GM10248 (cell line): ENCODE measurements at regions of chr16 and their contacts with region 1.

Region 1: DNA sequence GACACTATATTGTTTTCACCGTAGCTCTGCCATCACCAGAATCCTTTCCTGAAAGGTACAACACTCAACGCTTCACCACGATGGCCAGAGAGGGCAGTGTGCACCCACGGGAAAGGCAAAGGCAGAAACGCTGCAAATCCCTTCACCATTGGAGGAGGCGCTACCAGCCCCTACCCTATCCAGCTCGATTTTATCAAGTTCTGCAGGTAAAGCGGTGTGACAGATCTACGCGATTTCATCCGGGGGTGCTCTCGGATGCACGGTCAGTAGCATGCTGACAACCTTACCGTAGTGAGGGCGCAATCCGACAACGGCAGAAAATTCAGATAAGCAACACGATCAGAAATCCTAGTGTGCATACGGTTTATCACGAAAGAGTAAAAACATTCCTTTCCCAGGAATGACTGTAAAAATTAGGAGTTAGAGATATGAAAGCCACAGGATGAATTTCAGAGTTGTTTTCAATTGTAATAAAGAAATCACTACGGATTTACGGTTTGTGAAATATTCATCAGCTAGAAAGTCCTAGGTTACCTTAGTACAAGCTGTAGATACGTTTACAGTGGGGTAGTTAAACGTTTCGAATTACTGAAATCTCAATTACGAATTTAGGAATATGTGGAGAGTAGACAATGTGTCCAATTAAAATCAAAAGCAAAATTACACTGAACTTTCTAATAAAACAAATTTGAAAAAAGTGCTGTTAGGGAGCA is 1.8 kb downstream of the NETO2 start:
- DNase-seq: peak; percentile 79
- CTCF ChIP-seq: peak; percentile 97

Region 2: GRCh38 chr16:46973207-46973995 is 168.5 kb before region 1 on chr16 and contains the start of gene DNAJA2:
- CTCF ChIA-PET with region 1: interaction called, 18 read pairs
- POLR2A ChIA-PET with region 1: no interaction called
- DNase-seq: peak; percentile 93
- CTCF ChIP-seq: no peak

Region 3: DNA sequence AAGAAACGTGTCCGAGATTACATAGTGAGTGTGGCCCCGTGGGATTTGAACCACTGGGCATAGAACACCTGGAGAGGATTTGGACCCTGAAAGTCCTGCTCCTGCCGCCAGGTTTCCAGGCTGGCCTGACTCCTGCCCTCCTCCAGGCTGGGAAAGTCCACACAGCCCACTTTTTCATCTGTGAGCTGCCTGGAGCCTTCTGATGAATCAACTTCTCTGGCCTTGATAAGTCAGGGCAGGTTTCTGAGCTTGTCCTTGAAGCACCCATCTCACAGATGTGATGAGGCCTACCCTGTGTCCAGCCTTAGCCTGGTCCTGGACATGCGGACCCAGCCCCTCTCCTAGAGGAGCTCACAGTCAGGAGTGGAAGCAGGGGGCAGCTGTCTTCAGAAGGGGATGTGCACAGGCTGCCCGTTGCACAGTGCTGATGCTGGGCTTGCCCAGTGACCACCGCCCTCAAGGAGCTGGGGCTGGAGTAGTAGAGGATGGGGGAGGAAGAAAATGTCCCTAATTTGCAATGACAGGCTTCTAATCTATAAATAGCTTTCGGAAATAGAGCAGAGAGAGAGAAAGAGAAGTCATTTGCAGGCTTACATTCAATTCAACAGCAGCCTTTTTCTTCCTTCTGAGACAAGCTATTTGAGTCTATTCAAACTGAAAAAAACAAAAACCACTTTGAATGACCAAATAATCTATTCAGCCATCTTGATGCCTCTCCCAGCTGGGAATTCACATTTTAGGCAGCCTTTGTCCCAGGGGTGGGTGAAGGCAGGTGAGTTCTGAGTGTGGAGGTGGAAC is 95.0 kb before region 1 on chr16:
- CTCF ChIA-PET with region 1: interaction called, 43 read pairs
- POLR2A ChIA-PET with region 1: no interaction called
- DNase-seq: peak; percentile 67
- CTCF ChIP-seq: no peak

Region 4: DNA sequence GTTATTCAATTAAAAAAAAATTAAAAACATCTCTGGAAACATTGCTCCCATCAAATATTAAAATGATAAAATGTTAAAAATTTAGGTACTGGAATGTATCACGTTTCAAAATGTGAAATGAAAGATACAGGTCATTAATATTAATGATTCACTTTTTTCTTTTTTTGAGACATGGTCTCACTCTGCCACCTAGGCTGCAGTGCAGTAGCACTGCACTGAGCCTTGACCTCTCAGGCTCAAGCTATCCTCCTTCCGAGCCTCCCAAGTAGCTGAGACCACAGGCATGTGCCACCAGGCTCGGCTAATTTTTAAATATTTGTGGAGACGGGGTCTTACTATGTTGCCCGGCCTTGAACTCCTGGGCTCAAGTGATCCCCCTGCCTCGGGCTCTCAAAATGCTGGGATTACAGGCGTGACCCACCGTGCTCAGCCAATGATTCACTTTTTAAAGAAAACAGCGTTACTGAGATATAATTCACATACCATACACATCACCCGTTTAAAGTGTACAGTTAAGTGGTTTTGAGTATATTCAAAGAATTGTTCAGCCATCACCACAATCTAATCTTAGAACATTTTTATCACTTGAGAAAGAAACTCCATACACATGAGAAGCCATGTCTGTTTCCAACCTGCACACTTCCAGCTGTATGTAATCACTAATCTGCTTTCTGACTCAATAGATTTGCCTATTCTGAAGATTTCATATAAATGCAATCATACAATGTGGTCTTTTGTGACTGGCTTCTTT is 20.9 kb after region 1 on chr16:
- CTCF ChIA-PET with region 1: interaction called, 60 read pairs
- POLR2A ChIA-PET with region 1: no interaction called
- DNase-seq: no peak
- CTCF ChIP-seq: no peak

Region 5: DNA sequence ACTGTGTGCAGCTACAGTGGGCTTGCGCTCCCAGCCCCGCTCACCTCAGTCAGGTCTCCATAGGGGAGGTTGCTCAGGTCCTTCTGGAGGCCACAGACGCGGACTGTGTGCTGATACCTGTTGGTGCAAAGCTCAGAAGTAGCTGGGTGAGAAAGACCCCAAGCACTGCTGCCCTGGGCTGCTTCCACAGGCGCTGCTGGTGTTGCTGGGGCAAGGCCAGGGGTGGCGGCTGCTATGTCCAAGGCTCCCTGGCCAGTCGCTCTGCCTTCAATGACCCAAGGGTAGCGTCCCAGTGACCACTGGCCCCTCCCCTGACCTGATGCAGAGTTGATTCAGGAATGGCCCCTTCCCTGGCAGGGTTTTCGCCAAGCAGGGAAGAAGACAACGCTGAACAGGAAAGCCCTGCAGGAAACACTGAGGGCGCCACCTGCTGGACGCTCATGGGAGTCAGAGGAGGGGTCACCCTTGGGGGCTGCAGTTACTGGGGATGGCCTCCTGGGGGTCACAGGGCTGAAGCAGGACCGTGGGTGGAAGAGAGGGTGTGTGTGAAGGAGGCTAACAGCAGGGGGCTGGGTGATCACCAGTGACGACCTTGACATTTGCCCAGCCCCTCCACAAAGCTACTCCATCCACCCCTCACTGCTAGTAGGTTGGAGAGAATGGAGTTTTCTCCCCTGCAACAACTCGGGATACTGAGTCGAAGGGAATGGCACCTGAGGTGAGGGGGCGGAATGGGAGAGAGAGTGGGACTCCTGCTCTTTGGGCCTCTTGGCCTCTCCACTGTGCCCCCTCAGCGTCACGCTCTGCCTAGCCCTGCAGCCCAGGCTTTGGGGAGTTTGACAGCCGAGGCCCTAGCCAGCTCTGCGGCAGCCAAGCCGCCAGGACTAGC is 975.5 kb after region 1 on chr16:
- CTCF ChIA-PET with region 1: interaction called, 33 read pairs
- POLR2A ChIA-PET with region 1: no interaction called
- DNase-seq: peak; percentile 85
- CTCF ChIP-seq: peak; percentile 81

Region 6: GRCh38 chr16:48164907-48165726 is 1023.2 kb after region 1 on chr16:
- CTCF ChIA-PET with region 1: interaction called, 90 read pairs
- POLR2A ChIA-PET with region 1: interaction called, 6 read pairs
- DNase-seq: peak; percentile 83
- CTCF ChIP-seq: peak; percentile 95